MCF 10A (cell line): ENCODE measurements at regions of chr14 and their contacts with region 1.

Region 1: GRCh38 chr14:32710731-32711680 is 227.7 kb upstream of the NPAS3 start:
- DNase-seq: peak; percentile 56
- H3K4me3 Mint-ChIP-seq: no peak overlapping the region
- H3K27ac Mint-ChIP-seq: no peak overlapping the region
- H3K4me1 Mint-ChIP-seq: peaks cover 6% of the 10 kb centered on the region
- H3K27me3 Mint-ChIP-seq: no peaks in the 10 kb centered on the region
- CTCF ChIP-seq: peak; percentile 56

Region 2: DNA sequence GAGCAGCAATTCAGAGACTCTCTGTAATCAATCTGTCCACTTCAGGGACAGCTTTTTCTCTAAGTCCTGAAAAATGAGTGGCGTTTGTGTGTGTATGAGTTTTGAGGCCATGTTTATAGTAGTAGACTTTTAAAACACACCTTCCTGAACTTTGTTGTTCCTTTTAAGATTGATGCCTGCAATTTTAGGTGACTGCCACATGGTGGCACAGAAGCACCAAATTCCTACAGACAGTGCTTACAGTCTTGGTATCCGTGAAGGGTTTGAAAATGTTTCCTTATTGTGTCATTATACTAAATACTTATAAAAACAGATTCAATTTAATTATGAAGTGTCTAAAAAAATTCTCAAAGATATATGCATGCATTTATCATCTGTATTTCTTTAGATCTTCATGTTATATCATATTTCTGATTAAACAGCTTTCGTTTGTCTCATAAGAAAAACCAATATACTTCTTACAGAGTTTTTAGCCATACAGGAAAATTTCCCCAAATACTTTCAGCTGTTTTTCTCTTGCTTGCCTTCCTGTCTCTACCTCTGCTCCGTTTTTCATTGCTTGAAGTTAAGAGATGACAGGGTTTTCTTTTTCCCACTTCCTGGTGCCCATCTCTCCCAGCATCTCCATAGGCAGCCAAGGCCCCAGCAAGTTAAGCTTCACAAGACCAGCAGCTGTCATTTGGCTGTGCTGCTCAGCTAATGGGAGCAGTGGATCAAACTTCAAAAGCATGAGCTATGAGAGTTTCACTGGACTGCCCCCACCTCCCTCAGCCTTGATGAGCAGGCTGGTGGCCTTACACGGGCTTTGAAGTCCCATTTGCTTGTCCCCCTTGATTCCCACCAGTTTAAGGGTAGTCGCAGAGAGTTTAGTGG is 122.3 kb before region 1 on chr14:
- CTCF ChIA-PET with region 1: interaction called, 3 read pairs
- POLR2A ChIA-PET with region 1: no interaction called
- intact Hi-C with region 1: loop called (anchors 2 kb)
- DNase-seq: peak; percentile 67
- H3K4me3 Mint-ChIP-seq: no peak overlapping the region
- H3K27ac Mint-ChIP-seq: no peak overlapping the region
- H3K4me1 Mint-ChIP-seq: peaks cover 9% of the 10 kb centered on the region
- H3K27me3 Mint-ChIP-seq: no peaks in the 10 kb centered on the region
- CTCF ChIP-seq: peak; percentile 84

Region 3: GRCh38 chr14:32998433-32998832 is 287.4 kb after region 1 on chr14:
- CTCF ChIA-PET with region 1: no interaction called
- POLR2A ChIA-PET with region 1: no interaction called
- intact Hi-C with region 1: loop called (anchors 1 kb)
- DNase-seq: peak; percentile 35
- H3K4me3 Mint-ChIP-seq: no peak overlapping the region
- H3K27ac Mint-ChIP-seq: no peak overlapping the region
- H3K4me1 Mint-ChIP-seq: no peaks in the 10 kb centered on the region
- H3K27me3 Mint-ChIP-seq: no peaks in the 10 kb centered on the region
- CTCF ChIP-seq: peak; percentile 38

Region 4: GRCh38 chr14:33432407-33433023 is 721.5 kb after region 1 on chr14:
- CTCF ChIA-PET with region 1: interaction called, 6 read pairs
- POLR2A ChIA-PET with region 1: no interaction called
- intact Hi-C with region 1: loop called (anchors 1 kb)
- DNase-seq: peak; percentile 56
- H3K4me3 Mint-ChIP-seq: no peak overlapping the region
- H3K27ac Mint-ChIP-seq: no peak overlapping the region
- H3K4me1 Mint-ChIP-seq: peaks cover 13% of the 10 kb centered on the region
- H3K27me3 Mint-ChIP-seq: no peaks in the 10 kb centered on the region
- CTCF ChIP-seq: peak; percentile 53